Activated naive CD4-positive, alpha-beta T cell treated with anti-CD3 and anti-CD28 coated beads for 36 hours (primary cell): ENCODE measurements at regions of chr2 and their contacts with region 1.

Region 1: GRCh38 chr2:64873472-64873924 is 115.7 kb upstream of the SLC1A4 start:
- DNase-seq: peak; percentile 86
- H3K4me3 Mint-ChIP-seq: peak overlapping the region; percentile 19
- H3K27ac Mint-ChIP-seq: no peak overlapping the region
- H3K4me1 Mint-ChIP-seq: peaks cover 2% of the 10 kb centered on the region
- H3K27me3 Mint-ChIP-seq: no peaks in the 10 kb centered on the region

Region 2: GRCh38 chr2:64586883-64587481 is 286.5 kb before region 1 on chr2:
- CTCF ChIA-PET with region 1: interaction called, 10 read pairs
- intact Hi-C with region 1: loop called (anchors 1 kb)
- DNase-seq: no peak
- H3K4me3 Mint-ChIP-seq: no peak overlapping the region
- H3K27ac Mint-ChIP-seq: no peak overlapping the region
- H3K4me1 Mint-ChIP-seq: peaks cover 16% of the 10 kb centered on the region
- H3K27me3 Mint-ChIP-seq: no peaks in the 10 kb centered on the region

Region 3: GRCh38 chr2:64609227-64609941 is 264.1 kb before region 1 on chr2:
- CTCF ChIA-PET with region 1: interaction called, 5 read pairs
- intact Hi-C with region 1: loop called (anchors 1 kb)
- DNase-seq: peak; percentile 62
- H3K4me3 Mint-ChIP-seq: peak overlapping the region; percentile 65
- H3K27ac Mint-ChIP-seq: no peak overlapping the region
- H3K4me1 Mint-ChIP-seq: peaks cover 24% of the 10 kb centered on the region
- H3K27me3 Mint-ChIP-seq: no peaks in the 10 kb centered on the region

Region 4: DNA sequence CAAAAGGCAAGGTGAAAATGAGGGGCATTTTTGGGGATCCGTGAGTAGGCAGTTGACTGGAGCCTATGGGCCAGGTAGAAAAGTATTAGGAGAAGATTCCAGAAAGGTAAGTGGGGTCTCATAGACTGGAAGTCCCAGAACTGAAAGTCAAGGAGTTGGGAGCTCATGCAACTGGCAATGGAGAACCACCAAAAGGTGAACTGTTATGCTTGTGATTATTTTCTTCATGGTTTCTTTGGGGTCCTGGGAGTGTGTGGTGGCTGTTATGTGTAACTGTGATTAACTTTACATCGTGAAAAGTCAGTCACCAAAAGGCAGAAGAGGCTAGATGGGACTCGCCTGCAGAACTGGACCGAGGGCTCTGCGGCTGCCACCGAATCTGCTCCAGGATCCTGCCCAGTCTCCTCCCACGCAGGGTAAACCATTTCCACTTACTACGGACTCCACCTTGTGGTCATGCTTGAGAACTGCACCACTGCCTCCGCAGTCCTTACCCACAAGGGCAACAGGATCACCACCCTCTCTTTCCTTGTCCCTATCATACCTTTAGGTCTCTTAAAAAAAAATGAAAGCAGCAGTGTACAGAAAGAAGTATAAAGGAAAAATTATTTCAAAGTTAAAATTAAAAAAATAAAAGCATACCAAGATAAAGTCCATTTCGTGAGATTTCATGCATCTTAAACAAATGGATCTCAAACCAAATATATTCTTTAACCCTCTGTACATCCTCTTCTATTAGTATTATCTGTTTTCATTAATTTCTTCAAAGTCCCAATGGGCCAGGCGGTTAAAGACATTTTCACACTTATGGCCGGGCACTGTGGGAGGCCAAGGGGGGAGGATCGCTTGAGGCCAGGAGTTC is 167.1 kb after region 1 on chr2:
- CTCF ChIA-PET with region 1: no interaction called
- intact Hi-C with region 1: loop called (anchors 1 kb)
- DNase-seq: peak; percentile 88
- H3K4me3 Mint-ChIP-seq: no peak overlapping the region
- H3K27ac Mint-ChIP-seq: no peak overlapping the region
- H3K4me1 Mint-ChIP-seq: peaks cover 7% of the 10 kb centered on the region
- H3K27me3 Mint-ChIP-seq: no peaks in the 10 kb centered on the region

Region 5: DNA sequence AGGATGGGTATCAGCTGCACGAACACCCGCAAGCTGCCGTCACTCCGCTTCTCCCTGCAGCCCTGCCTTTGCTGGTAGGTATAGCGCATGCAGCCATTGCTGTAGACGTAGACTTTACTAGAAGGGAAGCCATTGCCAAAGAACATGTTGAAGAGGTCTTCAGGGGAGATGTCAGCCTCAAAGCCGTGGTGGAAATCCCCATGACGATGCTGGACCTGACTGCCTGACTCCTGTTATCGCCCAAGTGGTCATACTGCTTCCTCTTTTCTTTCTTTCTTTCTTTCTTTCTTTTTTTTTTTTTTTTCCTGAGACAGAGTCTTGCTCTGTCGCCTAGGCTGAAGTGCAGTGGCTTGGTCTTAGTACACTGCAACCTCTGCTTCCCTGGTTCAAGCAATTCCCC is 627.6 kb after region 1 on chr2:
- CTCF ChIA-PET with region 1: no interaction called
- intact Hi-C with region 1: no loop called
- DNase-seq: no peak
- H3K4me3 Mint-ChIP-seq: no peak overlapping the region
- H3K27ac Mint-ChIP-seq: no peak overlapping the region
- H3K4me1 Mint-ChIP-seq: no peaks in the 10 kb centered on the region
- H3K27me3 Mint-ChIP-seq: no peaks in the 10 kb centered on the region